Activated CD8-positive, alpha-beta memory T cell treated with anti-CD3 and anti-CD28 coated beads, Interleukin-2, amount 10 ng/mL, durations not matched to agents 7 days and 5 days (primary cell): ENCODE measurements at regions of chr12 and their contacts with region 1.

Region 1: DNA sequence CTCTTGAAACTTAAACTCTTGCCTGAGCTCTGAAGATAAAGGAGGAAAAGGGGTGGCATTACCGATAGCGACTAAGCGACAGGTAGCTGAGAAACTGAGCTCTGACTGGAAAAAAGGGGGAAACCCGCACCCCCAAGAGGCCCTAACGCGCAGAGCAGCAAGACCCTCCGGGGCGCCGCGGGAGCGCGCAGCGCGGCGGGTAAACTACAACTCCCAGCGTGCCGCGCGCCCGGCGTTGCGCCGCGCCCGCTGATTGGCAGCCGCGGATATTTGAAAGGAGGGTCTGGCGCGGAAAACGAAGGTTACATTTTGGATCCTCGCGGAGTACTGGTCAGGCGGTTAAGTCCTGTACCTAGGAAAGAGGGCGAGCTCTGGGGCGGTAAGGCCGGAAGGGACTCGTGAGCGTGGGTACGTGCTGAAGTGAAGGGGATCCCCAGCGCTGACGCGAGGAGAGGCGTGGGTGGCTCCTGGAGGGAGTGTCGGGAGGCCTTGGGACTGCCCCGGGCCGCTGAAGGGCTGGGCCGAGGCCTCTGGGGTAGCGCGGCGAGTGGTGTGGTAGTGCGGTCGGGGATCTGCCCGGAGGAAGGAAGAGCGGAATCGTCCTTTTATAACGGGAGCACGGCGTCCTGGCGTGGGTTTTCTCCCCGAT is at the start of gene ESPL1:
- DNase-seq: peak; percentile 92
- ATAC-seq: peak; percentile 96
- H3K4me3 Mint-ChIP-seq: peak within 1 kb of the TSS; percentile 100
- H3K27ac Mint-ChIP-seq: peak within 1 kb of the TSS; percentile 95
- H3K4me1 Mint-ChIP-seq: peaks cover 46% of the 10 kb centered on the region
- H3K27me3 Mint-ChIP-seq: no peaks in the 10 kb centered on the region
- total RNA-seq, gene ESPL1: 99.0 to 137 TPM

Region 2: DNA sequence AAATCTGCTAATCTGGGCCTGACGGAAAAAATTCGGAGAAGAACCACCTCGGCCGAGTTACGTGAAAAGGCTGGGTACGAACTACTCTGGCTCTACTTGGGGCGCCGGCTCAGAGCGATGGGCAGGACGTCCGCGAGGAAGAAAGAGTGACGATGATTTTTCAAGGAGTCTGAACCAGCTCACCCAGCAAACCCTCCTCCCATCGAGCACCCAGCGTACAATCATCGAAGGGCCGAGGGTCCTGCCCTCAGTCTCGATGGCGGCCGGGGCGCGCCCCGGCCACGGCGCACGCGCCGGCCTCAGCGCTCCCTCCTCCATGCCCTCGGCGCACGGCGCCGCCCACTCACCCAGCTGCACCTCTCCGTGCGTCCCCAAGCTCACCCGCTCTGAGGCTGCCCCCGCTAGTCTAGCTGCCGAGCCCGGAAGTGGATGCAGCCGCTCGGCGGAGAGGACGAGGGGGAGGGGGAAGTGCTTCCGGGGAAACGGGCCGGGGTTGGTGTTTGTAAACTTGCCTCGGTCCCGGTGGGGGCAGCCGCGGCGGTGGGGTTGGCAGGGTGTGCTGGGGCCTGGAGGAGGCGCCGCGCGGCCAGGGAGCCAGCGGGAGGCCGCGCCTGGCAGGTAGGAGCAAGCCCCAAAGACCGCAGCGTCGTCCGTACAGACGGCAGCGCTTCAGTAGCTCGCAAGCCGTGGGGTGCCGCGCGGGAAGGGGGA is 87.7 kb before region 1 on chr12 and contains the starts of genes CSAD and ZNF740:
- CTCF ChIA-PET with region 1: interaction called, 17 read pairs
- DNase-seq: peak; percentile 99
- ATAC-seq: peak; percentile 98
- H3K4me3 Mint-ChIP-seq: peak within 1 kb of the TSS; percentile 85
- H3K27ac Mint-ChIP-seq: peak within 1 kb of the TSS; percentile 98
- H3K4me1 Mint-ChIP-seq: peaks cover 50% of the 10 kb centered on the region
- H3K27me3 Mint-ChIP-seq: no peaks in the 10 kb centered on the region
- total RNA-seq, gene CSAD: 19.6 to 28.1 TPM
- total RNA-seq, gene ZNF740: 35.8 to 47.0 TPM

Region 3: DNA sequence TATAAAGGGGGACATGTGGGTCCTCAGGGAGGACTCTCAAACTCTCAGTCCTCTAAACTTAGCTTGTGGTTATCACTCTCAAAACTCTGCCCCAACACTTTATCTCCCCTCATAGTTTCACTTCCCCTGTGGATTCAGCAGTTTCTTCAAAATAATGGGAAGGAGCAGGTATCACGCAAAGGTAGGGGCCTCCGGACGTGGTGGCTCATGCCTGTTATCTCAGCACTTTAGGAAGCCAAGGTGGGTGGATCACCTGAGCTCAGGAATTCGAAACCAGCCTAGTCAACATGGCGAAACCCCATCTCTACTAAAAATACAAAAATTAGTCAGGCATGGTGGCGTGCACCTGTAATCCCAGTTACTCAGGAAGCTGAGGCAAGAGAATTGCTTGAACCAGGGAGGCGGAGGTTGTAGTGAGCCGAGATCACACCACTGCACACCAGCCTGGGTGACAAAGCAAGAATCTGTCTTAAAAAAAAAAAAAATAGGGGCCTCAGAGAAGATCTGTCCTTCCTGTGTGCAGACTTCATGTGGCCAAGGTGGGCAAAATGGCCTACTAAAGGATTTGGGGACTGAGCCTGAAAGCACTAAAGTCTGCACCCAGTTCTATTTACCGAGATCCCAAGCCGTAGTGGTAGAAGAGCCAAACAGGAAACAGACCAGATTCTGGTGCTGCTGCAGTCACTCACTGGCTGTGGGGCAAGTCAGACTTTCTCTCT is 67.5 kb before region 1 on chr12:
- CTCF ChIA-PET with region 1: interaction called, 248 read pairs
- DNase-seq: peak; percentile 75
- ATAC-seq: peak; percentile 35
- H3K4me3 Mint-ChIP-seq: peak overlapping the region; percentile 76
- H3K27ac Mint-ChIP-seq: peak overlapping the region; percentile 94
- H3K4me1 Mint-ChIP-seq: peaks cover 80% of the 10 kb centered on the region
- H3K27me3 Mint-ChIP-seq: no peaks in the 10 kb centered on the region

Region 4: DNA sequence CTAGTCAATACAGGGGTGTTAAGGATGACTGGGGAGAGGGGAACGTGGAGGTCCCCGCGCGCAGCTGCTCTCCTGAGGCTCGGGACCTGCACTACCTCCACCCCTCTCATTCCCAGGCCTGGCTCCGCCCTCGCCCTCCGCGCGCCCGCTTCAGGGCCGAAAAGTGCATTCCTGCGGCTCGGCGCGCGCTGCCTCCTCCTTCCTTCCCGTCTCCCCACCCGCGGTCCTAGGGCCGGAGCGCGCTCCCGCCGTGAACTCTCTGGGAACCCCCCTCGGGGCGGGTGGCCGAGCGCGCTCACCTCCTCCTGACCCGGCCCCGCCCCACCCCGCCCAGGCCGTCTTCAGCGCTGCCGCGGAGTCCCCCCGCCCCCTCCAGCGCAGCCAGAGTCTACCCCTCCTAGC is 47.3 kb before region 1 on chr12:
- CTCF ChIA-PET with region 1: interaction called, 248 read pairs
- DNase-seq: peak; percentile 92
- ATAC-seq: peak; percentile 71
- H3K4me3 Mint-ChIP-seq: peak overlapping the region; percentile 89
- H3K27ac Mint-ChIP-seq: peak overlapping the region; percentile 98
- H3K4me1 Mint-ChIP-seq: peaks cover 72% of the 10 kb centered on the region
- H3K27me3 Mint-ChIP-seq: no peaks in the 10 kb centered on the region

Region 5: DNA sequence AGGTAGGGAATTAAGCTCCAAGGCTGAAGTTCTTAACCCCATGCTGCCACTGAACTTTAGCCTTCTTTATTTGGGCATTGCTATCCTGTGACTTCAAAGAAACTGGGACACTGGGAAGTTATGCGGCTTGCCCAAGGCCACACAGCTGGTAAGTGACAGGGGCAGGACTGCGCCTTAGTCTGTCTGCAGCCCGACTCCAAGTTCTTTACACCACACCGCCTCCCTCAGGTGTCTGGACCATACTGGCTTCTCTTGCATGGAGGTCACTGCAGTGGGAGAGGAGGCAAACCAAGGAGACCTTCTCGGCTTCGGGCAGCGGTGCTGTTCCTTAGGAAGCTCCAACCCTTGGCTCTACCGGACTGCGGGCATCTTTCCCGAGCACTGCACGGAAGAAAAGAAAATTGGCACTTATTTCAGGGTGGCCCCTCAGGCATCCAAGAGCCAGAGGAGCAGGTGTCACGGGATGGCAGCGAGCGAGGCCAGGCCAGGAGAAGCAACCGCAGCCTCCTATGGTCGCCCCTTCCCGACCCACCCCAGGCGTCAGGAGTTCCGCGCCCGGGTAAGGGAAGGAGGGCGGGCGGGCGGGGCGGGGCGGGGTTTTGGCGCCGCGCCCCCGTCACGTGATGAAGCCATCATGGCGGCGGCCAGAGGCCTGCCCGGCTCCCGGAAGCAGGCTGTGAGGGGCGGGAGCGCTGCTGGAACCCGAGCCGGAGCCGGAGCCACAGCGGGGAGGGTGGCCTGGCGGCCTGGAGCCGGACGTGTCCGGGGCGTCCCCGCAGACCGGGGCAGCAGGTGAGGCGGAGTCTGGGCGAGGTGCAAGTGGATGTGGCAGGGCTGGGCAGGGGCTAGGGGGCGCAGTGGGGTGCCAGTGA is 16.4 kb before region 1 on chr12:
- CTCF ChIA-PET with region 1: interaction called, 41 read pairs
- DNase-seq: peak; percentile 81
- ATAC-seq: peak; percentile 89
- H3K4me3 Mint-ChIP-seq: peak overlapping the region; percentile 99
- H3K27ac Mint-ChIP-seq: peak overlapping the region; percentile 88
- H3K4me1 Mint-ChIP-seq: peaks cover 42% of the 10 kb centered on the region
- H3K27me3 Mint-ChIP-seq: no peaks in the 10 kb centered on the region

Region 6: GRCh38 chr12:53295070-53295890 is 27.2 kb after region 1 on chr12 and contains the start of gene PFDN5:
- CTCF ChIA-PET with region 1: interaction called, 13 read pairs
- DNase-seq: peak; percentile 93
- ATAC-seq: peak; percentile 88
- H3K4me3 Mint-ChIP-seq: peak within 1 kb of the TSS; percentile 98
- H3K27ac Mint-ChIP-seq: peak within 1 kb of the TSS; percentile 92
- H3K4me1 Mint-ChIP-seq: peaks cover 49% of the 10 kb centered on the region
- H3K27me3 Mint-ChIP-seq: no peaks in the 10 kb centered on the region
- total RNA-seq, gene PFDN5: 283 to 298 TPM

Region 7: DNA sequence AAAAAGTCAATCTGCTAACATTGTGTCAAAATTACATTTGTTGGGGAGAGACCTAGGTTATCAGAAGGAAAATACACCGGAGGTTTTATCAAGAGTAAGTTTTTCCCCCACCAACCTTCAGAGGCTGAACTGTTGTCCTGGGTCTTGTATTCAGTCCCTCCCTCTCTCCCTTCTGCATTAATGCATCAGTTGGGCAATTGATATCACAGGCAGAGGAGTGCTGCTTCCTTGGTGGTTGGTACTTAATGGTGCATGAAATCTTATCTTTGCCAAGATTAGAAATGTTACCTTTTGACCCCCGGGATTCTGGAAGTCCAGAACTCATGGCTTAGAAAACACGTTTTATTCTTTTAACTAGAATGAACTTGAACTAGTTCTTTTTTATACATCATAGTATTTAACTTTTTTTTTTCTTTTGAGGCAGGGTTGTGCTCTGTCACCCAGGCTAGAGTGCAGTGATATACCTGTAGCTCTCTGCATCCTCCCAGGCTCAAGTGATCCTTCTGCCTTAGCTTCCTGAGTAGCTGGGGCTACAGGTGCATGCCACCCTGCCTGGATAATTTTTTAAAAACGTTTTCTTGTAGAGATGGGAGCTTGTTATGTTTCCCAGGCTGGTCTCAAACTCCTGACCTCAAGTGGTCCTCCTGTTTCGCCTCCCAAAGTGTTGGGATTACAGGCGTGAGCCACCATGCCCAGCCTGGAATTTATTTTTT is 188.7 kb after region 1 on chr12:
- CTCF ChIA-PET with region 1: no interaction called
- DNase-seq: no peak
- ATAC-seq: no peak
- H3K4me3 Mint-ChIP-seq: no peak overlapping the region
- H3K27ac Mint-ChIP-seq: no peak overlapping the region
- H3K4me1 Mint-ChIP-seq: peaks cover 51% of the 10 kb centered on the region
- H3K27me3 Mint-ChIP-seq: no peaks in the 10 kb centered on the region